ENCODE measurements at regions of chr12 and their contacts with region 1.

Region 1: GRCh38 chr12:26798023-26798422 is 35.0 kb downstream of the ITPR2 start:
- DNase-seq: no peak
- ATAC-seq: peak in 6 of 8 donors; percentile 11 to 73 (median 44)
- H3K4me3 ChIP-seq: no peak overlapping the region
- H3K27ac ChIP-seq: no peak overlapping the region
- H3K4me1 ChIP-seq: peaks cover 0 to 26% (median under 1%) of the 10 kb centered on the region in 9 donors
- H3K27me3 ChIP-seq: no peaks in the 10 kb centered on the region
- CTCF ChIP-seq: no peak

Region 2: DNA sequence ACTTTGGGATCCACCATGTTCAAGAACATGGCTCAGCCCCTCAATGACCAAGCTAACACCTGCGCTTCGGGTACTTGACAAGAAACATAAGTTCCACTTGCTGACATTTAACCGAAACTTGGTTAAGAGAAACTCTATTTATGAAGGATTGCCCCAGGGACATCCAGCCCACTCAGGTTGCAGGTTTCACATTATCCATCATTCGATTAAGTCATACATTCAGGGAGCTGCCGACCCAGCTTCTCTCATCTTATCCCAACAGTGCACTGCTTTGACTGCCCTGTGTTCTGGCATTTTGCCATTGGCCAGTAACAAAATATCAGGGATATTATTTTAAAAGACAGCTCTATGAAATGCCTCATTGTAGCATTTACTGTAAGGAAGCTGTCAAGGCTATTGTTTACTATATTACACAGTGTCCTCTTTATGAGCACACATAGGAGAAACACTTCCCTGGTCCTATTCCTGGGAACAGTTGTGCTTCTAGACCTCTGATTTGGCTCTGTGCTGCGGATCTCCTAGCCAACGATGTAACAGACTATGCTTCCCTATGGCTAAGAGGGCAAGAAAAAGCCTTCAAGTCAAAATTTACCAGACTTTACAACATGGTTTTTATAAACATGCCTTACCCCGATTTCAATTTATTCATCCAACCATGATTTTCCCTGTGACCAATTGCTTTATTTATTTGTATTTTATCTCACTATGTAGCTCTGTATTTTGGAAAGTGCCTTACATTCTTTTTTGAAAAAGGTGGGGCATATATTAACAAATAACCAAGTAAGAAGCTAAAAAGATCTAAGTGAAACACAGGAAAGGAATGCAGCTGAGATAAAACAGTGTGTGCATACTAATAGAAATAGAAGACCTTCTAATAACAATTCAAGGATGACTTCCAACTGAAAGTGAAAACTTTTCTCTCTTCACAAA is 74.4 kb before region 1 on chr12:
- intact Hi-C with region 1: no loop called
- DNase-seq: no peak
- ATAC-seq: peak in 7 of 8 donors; percentile 79 to 95 (median 83)
- H3K4me3 ChIP-seq: no peak overlapping the region
- H3K27ac ChIP-seq: peak overlapping the region in 6 of 10 donors; percentile 15 to 65 (median 40)
- H3K4me1 ChIP-seq: peaks cover 0 to 48% (median 27%) of the 10 kb centered on the region in 9 donors
- H3K27me3 ChIP-seq: no peaks in the 10 kb centered on the region
- CTCF ChIP-seq: no peak

Region 3: DNA sequence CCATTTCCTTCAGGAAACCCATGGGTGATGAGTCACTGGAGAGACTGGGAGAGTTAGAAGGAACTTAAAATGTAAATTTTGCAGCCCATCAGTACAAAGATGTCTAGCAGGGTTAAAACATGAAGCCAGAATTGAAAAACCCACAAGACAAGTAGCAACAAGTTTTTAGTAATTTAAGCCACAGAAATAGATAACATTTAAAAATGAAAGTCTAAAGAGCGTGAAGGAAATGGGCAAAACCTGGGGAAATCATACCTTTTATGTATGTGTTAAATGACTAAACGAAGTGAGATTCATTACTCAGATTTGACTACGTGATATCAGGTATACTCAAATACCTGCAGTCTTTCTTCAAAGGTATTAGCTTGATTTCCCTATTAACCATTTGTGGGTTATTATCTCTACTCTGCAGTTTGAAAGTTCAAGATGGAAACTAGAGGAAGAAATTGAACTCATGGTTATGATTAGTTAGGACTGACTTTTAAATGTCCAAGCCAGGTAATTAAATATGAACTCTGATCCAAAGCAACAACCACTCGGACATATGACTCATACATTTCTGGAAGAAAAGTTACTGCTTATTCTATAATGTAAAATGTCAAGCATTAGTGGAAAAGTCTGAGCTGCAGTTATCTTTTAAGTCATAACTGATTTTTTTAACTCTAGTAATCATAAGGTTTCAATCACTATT is 49.1 kb before region 1 on chr12:
- intact Hi-C with region 1: loop called in 1 of 10 experiments (anchors 5 kb)
- DNase-seq: no peak
- ATAC-seq: no peak
- H3K4me3 ChIP-seq: no peak overlapping the region
- H3K27ac ChIP-seq: no peak overlapping the region
- H3K4me1 ChIP-seq: peaks cover 0 to 48% (median 7%) of the 10 kb centered on the region in 9 donors
- H3K27me3 ChIP-seq: no peaks in the 10 kb centered on the region
- CTCF ChIP-seq: no peak